ENCODE measurements at regions of chr20 and their contacts with region 1.

Region 1: GRCh38 chr20:41428285-41428684 is 61.7 kb upstream of the EMILIN3 start:
- DNase-seq: no peak
- CTCF ChIP-seq: no peak

Region 2: DNA sequence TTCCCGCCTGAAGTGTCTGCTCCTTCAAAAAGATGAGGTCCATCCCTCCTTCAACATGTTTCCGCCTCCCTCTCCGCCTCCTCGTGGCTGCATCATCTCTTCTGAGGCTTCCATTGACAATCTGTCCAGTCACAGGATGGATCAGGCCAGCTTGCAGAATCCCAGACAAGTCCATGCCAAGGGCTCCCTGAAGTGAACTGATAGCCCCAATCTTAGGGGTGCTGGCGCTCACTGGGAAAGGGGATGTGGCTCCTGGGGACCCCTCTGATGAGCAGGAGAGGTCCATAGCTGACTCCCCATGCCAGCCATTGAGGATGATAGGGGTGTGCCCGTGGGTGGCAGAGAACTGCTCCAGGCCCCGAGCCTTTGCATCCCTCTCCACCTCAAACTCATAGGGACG is 13.1 kb before region 1 on chr20:
- CTCF ChIA-PET with region 1: interaction called, 13 read pairs
- POLR2A ChIA-PET with region 1: no interaction called
- DNase-seq: no peak
- CTCF ChIP-seq: no peak